ENCODE measurements at regions of chr3 and their contacts with region 1.

Region 1: DNA sequence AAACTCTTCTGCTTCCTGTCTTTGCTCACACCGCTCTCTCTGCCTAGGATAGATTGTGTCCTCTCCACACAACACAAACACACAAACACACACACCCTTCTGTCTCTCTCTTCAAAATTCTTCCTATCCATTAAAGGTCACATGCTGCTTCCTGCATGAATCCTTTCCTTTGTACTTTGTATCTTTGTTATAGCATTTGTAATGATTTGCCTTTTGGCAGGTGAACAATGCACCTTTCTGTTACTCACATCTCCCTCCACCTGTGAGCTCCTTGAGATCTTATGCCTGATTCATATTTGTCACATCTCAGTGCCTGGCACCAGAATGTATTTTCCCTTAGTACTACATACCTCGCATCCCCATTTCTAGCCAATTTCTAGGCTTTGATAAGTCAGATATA is 251.4 kb upstream of the UMPS start:
- DNase-seq: no peak
- H3K4me3 ChIP-seq: no peak overlapping the region
- H3K27ac ChIP-seq: no peak overlapping the region
- H3K4me1 ChIP-seq: no peaks in the 10 kb centered on the region
- H3K27me3 ChIP-seq: no peaks in the 10 kb centered on the region
- CTCF ChIP-seq: no peak
- EP300 ChIP-seq: no peak
- POLR2A ChIP-seq: no peak

Region 2: GRCh38 chr3:124431331-124431994 is 47.4 kb before region 1 on chr3:
- intact Hi-C with region 1: loop called in 1 of 4 experiments (anchors 2 kb)
- DNase-seq: no peak
- H3K4me3 ChIP-seq: no peak overlapping the region
- H3K27ac ChIP-seq: no peak overlapping the region
- H3K4me1 ChIP-seq: no peaks in the 10 kb centered on the region
- H3K27me3 ChIP-seq: no peaks in the 10 kb centered on the region
- CTCF ChIP-seq: no peak
- EP300 ChIP-seq: no peak
- POLR2A ChIP-seq: no peak